Head of caudate nucleus (tissue), 42 donors: ENCODE measurements at regions of chr16 and their contacts with region 1.

Region 1: DNA sequence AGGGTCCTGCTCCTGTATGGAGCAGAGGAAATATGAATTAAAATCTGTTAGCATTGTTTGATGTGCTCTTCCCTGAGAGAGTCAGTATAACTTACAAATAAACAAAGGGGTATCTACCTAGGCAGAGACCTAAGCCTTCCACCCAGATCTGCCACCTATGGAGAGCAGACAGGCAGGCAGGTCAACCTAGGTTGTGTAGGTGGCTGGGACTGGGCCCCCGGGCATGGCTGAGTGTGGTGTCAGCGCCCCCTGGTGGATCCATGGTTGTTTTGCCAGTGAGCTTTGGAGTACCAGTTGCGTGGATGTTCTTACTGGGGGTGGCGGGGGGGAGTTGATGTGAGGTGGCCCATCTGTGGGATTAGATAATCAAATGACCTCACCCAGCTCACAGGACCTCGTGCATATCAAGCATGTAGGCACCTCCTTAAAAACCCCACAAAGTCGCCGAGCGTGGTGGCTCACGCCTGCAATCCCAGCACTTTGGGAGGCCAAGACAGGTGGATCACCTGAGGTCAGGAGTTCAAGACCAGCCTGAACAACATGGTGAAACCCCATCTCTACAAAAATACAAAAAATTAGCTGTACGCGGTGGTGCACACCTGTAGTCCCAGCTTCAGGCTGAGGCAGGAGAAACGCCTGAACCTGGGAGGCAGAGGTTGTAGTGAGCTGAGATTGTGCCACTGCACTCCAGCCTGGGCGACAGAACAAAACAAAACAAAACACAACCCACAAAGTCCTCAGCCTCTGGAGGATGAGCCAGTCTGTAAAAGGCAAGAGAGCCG is 17.6 kb downstream of the DUS2 start:
- DNase-seq: peak; percentile 62 to 94 (median 84)

Region 2: GRCh38 chr16:67993189-67994039 is 47.3 kb before region 1 on chr16:
- intact Hi-C with region 1: loop called (anchors 2 kb)
- DNase-seq: peak; percentile 27 to 87 (median 72)